ENCODE measurements at regions of chr5 and their contacts with region 1.

Region 1: GRCh38 chr5:178153573-178154343 is at the start of gene NHP2:
- DNase-seq: peak; percentile 98 to 99 (median 99)
- H3K4me3 ChIP-seq: peak within 1 kb of the TSS; percentile 64 to 99 (median 91)
- H3K27ac ChIP-seq: peak within 1 kb of the TSS in 47 of 59 donors; percentile 2 to 85 (median 64)
- H3K27me3 ChIP-seq: no peaks in the 10 kb centered on the region
- CTCF ChIP-seq: peak in 24 of 56 donors; percentile 2 to 56 (median 26)
- total RNA-seq, gene NHP2: 65.7 to 132 (median 91.9) TPM

Region 2: GRCh38 chr5:177599731-177600507 is 553.8 kb before region 1 on chr5 and contains the start of gene B4GALT7:
- intact Hi-C with region 1: loop called (anchors 10 kb)
- DNase-seq: peak; percentile 61 to 94 (median 74)
- H3K4me3 ChIP-seq: peak within 1 kb of the TSS; percentile 72 to 99 (median 88)
- H3K27ac ChIP-seq: peak within 1 kb of the TSS; percentile 34 to 95 (median 85)
- H3K27me3 ChIP-seq: no peaks in the 10 kb centered on the region
- CTCF ChIP-seq: peak in 12 of 56 donors; percentile 3 to 38 (median 18)
- total RNA-seq, gene B4GALT7: 17.5 to 45.7 (median 25.3) TPM

Region 3: DNA sequence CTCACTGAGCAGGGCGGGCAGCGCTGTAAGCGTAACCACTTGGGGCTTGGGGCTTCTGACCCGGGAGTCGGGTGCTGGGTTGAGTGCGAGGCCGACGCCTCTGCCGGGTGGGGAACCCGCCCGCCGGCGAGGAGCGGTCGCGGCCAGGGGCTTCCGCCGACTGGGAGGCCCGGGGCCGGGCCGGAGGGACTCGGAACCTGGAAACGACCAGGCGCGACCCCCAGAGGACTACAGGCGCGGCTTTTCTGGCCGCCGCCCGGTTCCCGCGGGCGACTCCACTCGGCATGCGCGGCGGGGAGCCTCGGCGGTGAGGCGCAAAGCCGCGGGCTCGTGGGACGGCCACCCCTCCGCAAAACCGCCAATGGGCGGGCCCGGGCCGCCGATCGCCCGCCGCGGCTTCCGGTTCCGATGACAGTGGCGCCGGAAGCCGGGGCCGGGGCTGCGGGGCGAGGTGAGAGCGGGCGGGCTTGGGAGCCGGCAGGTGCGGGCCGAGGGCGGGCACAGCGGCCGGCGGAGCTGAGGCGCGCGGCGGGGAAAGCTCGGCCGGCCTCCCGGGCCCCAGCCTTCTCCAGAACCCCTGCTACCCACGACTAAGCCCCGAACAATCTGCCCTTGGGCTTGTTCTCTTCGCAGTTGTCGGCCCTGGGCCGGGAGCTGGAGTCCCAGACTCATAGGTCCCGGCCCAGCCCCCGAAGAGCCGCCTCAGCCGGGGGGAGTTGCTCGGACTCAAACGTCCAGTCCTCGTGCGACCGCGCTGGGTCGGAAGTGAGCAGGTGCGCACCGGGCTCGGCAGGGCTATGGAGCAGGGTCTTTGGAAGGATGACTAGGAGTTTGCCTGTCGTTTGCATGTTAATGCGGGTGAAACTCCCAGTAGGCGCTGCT is 22.9 kb before region 1 on chr5 and contains the start of gene RMND5B:
- intact Hi-C with region 1: loop called (anchors 2 kb)
- DNase-seq: peak; percentile 59 to 90 (median 78)
- H3K4me3 ChIP-seq: peak within 1 kb of the TSS; percentile 68 to 99 (median 92)
- H3K27ac ChIP-seq: peak within 1 kb of the TSS; percentile 34 to 97 (median 88)
- H3K27me3 ChIP-seq: no peaks in the 10 kb centered on the region
- CTCF ChIP-seq: peak in 14 of 56 donors; percentile 6 to 43 (median 15)
- total RNA-seq, gene RMND5B: 30.6 to 55.2 (median 42.7) TPM

Measured in dorsolateral prefrontal cortex (tissue), 120 donors.